ENCODE measurements at regions of chr3 and their contacts with region 1.

Region 1: DNA sequence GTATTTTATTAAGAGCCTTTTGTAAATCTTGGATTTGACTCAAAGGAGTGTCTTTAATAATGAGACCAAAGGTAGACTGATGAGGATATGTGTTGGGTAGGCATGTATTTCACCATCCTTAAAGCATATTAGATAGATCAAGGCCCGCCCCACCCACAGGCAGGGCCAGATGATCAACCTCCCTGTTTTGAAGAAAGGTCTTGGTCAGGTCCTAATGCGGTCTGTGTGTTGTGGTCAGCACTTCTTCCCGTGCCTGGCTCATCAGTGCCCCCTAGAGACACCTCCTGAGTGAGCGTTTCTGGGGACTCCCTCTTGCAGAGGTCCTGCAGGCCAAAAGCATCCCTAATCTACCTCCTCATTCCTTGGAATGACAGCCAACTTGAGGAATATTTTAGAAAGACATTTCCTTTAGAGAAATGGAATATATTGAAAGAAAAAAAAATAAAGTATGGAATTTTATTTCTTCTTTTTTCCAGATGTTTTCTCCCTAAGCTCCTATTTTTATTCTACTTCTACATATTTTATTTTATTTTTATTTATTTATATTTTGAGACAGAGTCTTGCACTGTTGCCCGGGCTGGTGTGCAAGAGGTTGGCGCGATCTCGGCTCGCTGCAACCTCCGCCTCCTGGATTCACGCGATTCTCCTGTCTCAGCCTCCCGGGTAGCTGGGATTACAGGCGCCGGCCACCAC is 6.0 kb downstream of the TM4SF4 start:
- DNase-seq: peak in 41 of 42 donors; percentile 18 to 86 (median 66)

Region 2: GRCh38 chr3:149393345-149394160 is 86.9 kb before region 1 on chr3:
- intact Hi-C with region 1: loop called (anchors 10 kb)
- DNase-seq: peak; percentile 31 to 84 (median 59)